Right ventricle myocardium superior (tissue), 1 donor: ENCODE measurements at regions of chr13 and their contacts with region 1.

Region 1: DNA sequence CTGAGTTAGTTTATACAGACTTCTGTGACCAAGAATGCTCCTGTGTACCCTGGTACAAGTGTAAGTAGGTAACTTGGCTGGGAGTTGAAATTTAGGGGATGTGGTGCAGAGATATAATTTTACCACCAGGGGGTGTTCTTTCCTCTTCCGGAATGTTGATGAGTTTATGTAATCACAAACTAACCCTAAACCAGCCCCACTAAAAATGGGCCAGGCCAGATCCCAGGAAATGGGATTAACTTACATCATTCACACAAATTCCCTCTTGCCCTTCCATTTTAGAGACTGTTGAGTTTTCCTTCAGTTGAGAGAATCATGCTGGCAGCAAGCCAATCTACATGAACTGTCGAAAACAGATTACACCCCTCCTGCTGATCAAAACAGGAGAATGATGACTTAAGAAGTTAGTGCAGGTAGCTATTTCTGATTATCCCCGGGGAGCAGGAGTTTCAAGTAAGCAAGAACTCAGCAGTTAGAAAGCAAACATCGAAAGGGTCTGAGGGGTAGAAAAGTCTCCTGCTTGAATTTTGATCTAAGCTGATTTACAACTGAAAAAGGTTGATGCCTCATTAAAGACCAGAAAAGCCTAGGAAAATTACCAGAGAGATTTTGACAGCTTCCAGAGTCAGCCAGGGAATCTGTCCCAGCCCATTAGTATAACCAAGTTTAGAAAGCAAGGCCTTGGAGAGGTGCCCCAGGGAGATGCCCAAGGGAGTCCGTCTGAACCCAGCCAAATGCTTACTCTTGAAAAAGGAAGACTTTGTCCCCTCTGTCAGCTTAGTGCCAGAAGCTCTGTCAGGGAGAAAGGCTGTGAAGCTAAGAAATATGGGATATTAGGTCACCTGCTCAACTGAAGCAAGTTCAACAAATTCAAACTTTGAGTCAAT is 32.3 kb upstream of the MED4 start:
- DNase-seq: peak; percentile 86
- ATAC-seq: peak; percentile 86

Region 2: GRCh38 chr13:47549219-47549752 is 577.9 kb before region 1 on chr13:
- intact Hi-C with region 1: no loop called
- DNase-seq: no peak
- ATAC-seq: no peak

Region 3: GRCh38 chr13:48303359-48304142 is 176.4 kb after region 1 on chr13 and contains the start of gene RB1:
- intact Hi-C with region 1: loop called (anchors 10 kb)
- DNase-seq: peak; percentile 96
- ATAC-seq: peak; percentile 95
- total RNA-seq, gene RB1: 24.4 TPM